AG04449 (cell line): ENCODE measurements at regions of chr12 and their contacts with region 1.

Region 1: GRCh38 chr12:3041558-3042164 is 35.5 kb upstream of the TSPAN9 start:
- DNase-seq: no peak
- H3K4me3 ChIP-seq: no peak overlapping the region
- CTCF ChIP-seq: peak; percentile 83

Region 2: DNA sequence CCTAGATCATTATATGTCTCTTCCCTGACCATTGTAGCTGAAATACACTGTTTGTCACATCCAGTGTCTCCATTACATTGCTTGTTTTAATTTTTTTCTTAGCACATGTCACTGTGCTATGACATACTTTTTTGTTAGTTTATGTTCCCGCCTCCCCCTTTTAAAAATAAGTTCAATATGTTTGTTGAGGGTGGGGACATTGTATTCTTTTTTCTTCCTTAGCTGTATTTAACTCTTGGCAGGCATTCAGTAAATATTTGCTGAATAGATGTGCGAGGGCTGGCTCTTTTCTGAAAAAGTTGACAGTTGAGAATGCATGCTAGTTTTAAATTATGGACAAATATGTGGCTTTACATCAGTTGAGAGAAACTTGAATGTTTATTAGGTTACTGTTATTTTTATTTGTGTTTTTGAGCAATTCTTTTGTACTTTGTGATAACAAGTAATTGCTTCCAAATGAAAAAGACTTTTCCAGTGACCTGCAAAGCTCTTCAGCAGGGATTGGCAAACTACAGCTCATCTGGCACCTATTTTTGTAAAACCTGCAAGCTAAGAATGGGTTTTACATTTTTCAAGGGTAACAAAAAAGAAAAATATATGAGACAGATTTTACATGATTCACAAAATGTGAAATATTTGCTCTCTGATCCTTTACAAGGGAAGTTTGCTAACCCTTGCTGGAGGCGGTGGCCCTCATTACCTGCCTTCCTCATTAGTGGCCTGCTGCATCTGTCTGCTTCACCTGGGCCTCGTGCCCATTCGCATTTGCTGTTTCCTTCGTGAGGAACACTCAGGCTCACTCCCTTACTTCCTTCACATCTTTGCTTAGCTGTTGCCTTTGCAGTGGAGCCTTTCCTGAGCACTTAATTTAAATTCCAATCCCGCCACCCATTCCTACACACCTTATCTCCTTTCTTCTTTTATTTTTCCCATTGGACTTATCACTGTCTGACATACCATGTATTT is 1821.3 kb before region 1 on chr12:
- CTCF ChIA-PET with region 1: no interaction called
- POLR2A ChIA-PET with region 1: no interaction called
- DNase-seq: no peak
- H3K4me3 ChIP-seq: no peak overlapping the region
- CTCF ChIP-seq: no peak

Region 3: DNA sequence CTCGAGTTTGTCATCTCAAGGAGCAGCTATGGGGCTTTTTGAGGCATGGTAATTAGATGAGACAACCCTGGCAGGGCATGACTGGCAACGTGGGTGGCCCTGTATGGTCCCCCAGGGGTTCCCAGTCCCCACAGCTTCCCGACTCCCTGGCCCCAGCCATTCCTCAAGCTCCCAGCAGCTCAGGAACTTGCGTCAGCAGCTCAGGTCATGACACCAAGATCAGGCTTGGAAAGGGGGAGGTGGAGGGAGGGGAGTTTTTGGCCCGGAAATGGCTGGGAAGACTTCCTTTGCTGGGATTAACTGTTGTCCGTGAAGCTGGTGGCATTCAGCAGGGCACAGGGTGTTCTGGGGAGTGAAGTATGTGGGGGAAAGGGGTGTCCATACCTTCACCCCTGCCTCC is 196.4 kb before region 1 on chr12:
- CTCF ChIA-PET with region 1: interaction called, 11 read pairs
- POLR2A ChIA-PET with region 1: no interaction called
- DNase-seq: peak; percentile 34
- H3K4me3 ChIP-seq: no peak overlapping the region
- CTCF ChIP-seq: no peak

Region 4: DNA sequence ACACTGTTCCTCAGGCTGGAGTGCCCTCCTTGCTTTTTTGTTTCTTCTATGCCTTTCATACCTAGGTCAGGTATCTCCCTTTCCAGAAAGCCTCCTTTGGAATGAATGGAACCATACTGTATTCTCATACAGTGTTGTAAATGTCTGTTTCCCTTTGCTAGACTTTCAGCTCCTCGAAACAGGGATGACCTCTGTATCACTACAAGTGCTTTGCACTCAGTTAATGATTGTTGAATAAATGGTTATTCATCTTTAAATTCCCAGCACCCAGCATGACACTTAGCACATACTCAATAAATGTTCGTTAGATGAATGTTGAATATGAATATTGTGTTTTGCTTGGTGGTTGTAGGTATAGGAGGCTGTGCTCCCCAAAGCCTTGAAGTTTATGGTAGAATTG is 156.9 kb before region 1 on chr12:
- CTCF ChIA-PET with region 1: interaction called, 31 read pairs
- POLR2A ChIA-PET with region 1: no interaction called
- DNase-seq: no peak
- H3K4me3 ChIP-seq: no peak overlapping the region
- CTCF ChIP-seq: no peak

Region 5: DNA sequence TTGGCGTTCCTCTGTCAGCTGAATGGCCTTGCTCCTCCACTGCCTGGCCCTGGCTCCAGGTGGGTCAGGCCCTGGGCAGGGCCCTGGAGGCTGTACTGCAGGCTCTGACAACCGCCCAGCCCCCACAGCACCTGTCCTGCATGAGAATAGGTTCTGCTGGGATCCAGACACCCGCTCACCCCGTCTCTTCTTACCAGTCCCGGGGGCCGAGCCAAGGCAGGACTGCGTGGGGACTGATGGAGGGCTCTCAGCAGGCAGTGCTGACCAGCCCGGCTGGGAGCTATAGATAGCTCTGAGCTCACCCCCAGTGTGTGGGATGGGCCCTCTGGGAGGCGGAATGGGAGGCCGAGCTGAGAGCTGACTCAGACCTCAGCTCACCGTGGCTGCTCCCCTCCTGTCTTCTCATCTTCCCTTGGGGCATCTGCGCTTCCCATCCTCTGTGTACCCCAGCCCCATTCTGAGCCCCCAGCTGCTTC is 42.8 kb before region 1 on chr12:
- CTCF ChIA-PET with region 1: no interaction called
- POLR2A ChIA-PET with region 1: no interaction called
- DNase-seq: peak; percentile 34
- H3K4me3 ChIP-seq: no peak overlapping the region
- CTCF ChIP-seq: no peak

Region 6: DNA sequence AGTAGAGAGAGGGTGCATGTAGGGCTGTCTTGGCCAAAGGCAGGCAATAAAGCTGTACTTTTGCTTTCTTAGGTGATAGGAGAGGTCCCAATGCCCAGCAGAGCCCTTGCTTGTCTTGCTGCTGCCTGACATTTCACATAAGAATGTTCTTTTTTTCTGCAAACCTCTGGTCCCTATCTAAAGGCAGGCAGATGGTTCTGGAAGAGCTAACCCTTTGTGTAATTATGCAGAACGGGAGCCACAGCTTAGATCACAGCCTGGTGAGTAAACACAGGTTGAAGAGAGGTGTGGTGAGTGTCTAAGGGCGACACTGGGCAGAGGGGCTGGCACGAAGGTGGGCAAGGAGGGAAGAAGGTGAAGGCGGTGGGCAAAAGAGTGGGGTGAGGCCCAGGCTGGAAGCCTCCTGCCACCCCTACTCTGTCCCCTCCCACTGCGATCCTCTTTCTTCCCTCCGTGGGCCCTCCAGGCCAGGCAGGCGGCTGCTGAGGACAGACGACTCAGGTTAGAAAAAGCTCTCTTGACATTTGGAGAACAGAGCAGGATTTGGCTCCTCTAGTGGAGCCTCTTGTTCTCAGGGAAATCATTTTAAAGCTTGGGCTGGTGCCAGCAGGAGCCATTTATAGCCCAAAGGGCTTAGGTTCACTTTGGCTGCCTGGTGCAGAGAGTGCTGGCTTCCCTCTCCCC is 492.2 kb after region 1 on chr12:
- CTCF ChIA-PET with region 1: no interaction called
- POLR2A ChIA-PET with region 1: no interaction called
- DNase-seq: no peak
- H3K4me3 ChIP-seq: no peak overlapping the region
- CTCF ChIP-seq: no peak